GM10248 (cell line): ENCODE measurements at regions of chr15 and their contacts with region 1.

Region 1: DNA sequence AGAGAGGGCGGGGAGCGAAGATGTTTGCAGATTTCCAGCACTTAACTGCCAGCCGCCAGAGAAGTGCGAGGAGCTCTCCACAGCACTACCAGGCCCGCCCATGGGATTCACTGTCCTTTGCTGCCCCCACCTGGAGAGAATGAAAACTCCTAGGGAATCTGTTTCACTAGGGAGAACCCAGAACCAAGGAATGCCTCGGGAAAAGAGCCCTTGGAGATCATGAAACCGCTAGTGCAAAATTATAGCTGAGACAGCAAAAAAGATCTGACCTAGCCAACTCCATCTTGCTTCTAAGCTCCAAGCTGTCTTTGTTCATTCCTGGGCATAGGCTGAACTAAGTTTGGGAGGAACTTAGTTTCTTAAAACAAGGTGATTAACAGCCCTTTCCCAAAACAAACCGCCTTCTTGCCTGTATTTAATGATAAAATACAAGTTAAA is 82.6 kb upstream of the GCNT3 start:
- DNase-seq: peak; percentile 66
- CTCF ChIP-seq: peak; percentile 75

Region 2: GRCh38 chr15:58227706-58228543 is 1301.1 kb before region 1 on chr15:
- CTCF ChIA-PET with region 1: interaction called, 28 read pairs
- POLR2A ChIA-PET with region 1: no interaction called
- DNase-seq: peak; percentile 64
- CTCF ChIP-seq: peak; percentile 78

Region 3: DNA sequence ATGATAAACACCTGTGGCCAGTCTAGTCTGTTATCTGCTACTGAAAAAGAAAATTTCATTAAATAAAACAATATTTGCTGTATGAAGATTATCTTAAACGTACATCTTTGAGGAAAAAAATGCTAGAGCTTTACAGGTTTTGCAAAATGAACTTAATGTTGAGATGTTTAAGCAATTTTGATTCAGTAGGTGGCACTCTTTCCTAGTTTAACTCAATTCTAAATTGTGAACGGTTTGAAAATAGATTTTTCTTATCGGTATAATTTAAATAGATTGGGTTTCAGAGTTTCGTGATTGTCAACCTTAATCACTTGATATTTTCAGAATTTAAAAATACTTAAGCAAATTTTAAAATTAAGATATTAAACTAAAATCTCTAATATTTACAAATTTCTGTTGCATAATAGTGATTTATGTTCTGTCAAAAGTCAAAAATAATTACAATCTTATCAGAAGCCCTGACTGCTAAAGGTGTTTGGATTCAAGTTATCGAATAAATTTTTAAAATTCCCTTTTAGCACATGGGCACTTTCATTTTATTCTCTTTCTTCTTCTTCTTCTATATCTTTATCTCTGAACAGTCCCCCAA is 548.5 kb before region 1 on chr15:
- CTCF ChIA-PET with region 1: interaction called, 12 read pairs
- POLR2A ChIA-PET with region 1: no interaction called
- DNase-seq: peak; percentile 25
- CTCF ChIP-seq: peak; percentile 44

Region 4: GRCh38 chr15:59516655-59517461 is 12.1 kb before region 1 on chr15:
- CTCF ChIA-PET with region 1: interaction called, 75 read pairs
- POLR2A ChIA-PET with region 1: no interaction called
- DNase-seq: peak; percentile 61
- CTCF ChIP-seq: no peak

Region 5: DNA sequence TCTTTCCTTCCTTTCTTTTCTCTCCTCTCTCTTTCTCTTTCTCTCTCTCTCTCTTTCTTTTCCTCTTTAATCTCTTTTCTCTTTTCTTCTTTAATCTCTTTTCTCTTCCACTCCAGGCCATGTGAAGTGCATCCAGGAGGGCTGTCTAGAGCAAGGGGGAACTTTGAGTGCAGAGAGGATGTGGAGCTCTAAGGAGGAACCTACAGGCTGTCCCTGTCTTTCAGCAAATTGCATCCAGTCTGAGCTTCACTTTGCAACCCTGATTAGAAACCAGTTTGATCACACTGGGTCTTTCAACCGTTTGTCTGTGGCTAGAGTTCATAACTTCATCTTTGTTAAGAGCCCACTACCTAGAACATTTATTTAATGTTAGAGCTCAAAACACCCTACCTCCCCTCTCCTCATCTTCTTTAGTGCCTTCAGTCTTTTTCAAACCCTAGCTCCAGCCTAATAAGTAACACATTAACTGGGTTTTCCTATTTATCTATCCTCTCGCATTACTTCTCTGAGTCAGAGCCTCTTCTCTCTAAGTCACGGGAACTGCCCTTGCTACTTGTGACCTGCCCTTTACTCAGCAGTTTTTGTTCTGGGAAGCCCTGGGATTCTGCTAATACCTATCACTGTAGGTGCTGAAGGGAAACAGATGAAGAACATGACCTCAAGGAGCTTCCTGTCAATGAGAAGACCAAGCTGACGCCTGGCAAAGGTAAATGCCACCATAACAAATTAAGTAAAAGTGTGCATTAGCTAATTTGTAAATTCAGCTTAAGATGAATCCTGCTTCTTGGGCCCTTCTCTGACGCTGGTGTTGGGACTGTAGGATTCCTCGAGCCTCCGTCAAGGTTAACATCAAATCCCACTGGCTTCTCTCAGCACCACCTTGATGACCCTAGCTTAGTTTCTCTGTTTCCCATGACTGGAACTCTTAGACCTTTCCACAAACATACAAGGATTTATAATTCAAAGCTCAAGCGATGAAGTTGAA is 82.6 kb after region 1 on chr15 and contains the start of gene GCNT3:
- CTCF ChIA-PET with region 1: interaction called, 14 read pairs
- POLR2A ChIA-PET with region 1: no interaction called
- DNase-seq: peak; percentile 21
- CTCF ChIP-seq: no peak